Mammary epithelial cell (primary cell): ENCODE measurements at regions of chr2 and their contacts with region 1.

Region 1: GRCh38 chr2:60505880-60506260 is 47.6 kb downstream of the BCL11A start:
- DNase-seq: peak; percentile 58
- H3K4me3 ChIP-seq: no peak overlapping the region
- H3K27ac ChIP-seq: no peak overlapping the region
- H3K4me1 ChIP-seq: peaks cover 23% of the 10 kb centered on the region
- H3K27me3 ChIP-seq: no peaks in the 10 kb centered on the region
- CTCF ChIP-seq: no peak

Region 2: GRCh38 chr2:60480089-60480773 is 25.6 kb before region 1 on chr2:
- CTCF ChIA-PET with region 1: no interaction called
- dilution Hi-C with region 1: no loop called
- in situ Hi-C with region 1: no loop called
- intact Hi-C with region 1: loop called (anchors 1 kb)
- DNase-seq: no peak
- H3K4me3 ChIP-seq: no peak overlapping the region
- H3K27ac ChIP-seq: no peak overlapping the region
- H3K4me1 ChIP-seq: peaks cover 24% of the 10 kb centered on the region
- H3K27me3 ChIP-seq: no peaks in the 10 kb centered on the region
- CTCF ChIP-seq: no peak

Region 3: GRCh38 chr2:60492548-60492947 is 13.3 kb before region 1 on chr2:
- CTCF ChIA-PET with region 1: no interaction called
- dilution Hi-C with region 1: no loop called
- in situ Hi-C with region 1: no loop called
- intact Hi-C with region 1: no loop called
- DNase-seq: no peak
- H3K4me3 ChIP-seq: no peak overlapping the region
- H3K27ac ChIP-seq: no peak overlapping the region
- H3K4me1 ChIP-seq: peaks cover 9% of the 10 kb centered on the region
- H3K27me3 ChIP-seq: no peaks in the 10 kb centered on the region
- CTCF ChIP-seq: no peak

Region 4: DNA sequence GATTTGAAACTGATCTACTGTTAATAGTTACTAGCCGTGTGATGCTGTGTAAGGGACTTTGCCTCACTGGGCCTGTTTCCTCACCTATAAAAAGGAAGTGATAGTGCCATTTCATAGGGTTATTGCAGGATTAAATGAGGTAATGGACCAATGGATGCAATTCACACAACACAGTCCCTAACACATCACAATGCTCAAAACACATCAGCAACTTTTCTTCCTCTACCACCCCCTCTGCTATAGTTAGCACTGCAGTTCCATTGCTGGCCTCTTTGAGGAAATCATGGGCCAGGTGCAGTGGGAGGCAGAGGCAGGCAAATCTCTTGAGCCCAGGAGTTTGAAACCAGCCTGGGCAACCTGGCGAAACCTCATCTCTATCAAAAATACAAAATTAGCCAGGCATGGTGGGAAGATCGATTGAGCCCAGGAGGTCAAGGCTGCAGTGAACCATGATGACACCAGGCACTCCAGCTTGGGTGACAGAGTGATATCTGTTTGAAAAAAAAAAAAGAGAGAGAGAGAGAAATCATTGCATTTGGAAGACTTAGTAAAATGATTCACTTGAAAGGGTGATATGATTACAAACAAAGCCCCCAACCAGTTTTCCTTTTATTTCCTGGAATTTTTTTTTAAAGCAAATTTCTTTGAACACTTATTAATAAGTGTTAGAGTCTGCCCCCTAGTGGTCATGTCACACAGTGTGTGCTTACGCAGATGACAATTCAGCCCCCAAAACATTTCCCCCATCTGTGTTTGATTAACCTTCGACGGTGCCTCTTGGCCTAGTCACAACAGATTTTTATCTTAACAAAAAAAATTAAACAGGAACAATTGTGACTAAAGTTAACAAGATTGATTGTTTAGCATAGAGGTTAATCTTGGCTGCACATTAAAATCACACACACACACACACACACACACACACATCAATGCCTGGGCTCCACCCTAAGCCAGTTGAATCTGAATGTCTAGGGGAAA is 136.2 kb after region 1 on chr2:
- CTCF ChIA-PET with region 1: no interaction called
- dilution Hi-C with region 1: no loop called
- in situ Hi-C with region 1: no loop called
- intact Hi-C with region 1: no loop called
- DNase-seq: peak; percentile 7
- H3K4me3 ChIP-seq: no peak overlapping the region
- H3K27ac ChIP-seq: no peak overlapping the region
- H3K4me1 ChIP-seq: no peaks in the 10 kb centered on the region
- H3K27me3 ChIP-seq: no peaks in the 10 kb centered on the region
- CTCF ChIP-seq: peak; percentile 75